Right ventricle myocardium inferior (tissue), 1 donor: ENCODE measurements at regions of chr7 and their contacts with region 1.

Region 1: DNA sequence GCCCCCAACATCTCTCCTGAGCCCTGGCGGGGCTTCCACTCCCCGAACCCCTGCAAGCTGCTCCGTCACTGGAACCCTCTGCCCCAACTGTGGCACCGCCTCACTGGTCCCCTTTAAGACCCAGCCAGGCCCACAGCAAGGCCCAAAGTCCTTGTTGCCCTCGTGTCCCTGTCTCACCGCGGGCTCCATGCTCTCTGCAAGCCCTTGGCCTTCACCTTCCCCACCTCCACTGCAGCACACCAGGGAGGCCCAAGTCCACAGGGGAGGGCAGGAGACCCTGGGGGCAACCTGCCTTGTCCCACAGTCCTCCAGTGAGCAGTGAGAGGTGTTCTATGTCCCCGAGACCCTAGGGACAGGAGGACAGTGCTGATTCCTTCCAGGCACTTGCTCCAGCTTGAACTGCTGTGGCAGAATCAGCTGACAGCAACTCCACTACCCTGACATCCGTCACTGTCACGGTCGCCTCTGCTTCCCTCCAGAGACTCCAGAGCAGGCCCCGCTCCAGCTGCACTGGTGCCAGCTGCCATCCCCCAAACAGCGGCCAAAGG is 105.3 kb downstream of the CYTH3 start:
- DNase-seq: no peak
- ATAC-seq: peak; percentile 67

Region 2: DNA sequence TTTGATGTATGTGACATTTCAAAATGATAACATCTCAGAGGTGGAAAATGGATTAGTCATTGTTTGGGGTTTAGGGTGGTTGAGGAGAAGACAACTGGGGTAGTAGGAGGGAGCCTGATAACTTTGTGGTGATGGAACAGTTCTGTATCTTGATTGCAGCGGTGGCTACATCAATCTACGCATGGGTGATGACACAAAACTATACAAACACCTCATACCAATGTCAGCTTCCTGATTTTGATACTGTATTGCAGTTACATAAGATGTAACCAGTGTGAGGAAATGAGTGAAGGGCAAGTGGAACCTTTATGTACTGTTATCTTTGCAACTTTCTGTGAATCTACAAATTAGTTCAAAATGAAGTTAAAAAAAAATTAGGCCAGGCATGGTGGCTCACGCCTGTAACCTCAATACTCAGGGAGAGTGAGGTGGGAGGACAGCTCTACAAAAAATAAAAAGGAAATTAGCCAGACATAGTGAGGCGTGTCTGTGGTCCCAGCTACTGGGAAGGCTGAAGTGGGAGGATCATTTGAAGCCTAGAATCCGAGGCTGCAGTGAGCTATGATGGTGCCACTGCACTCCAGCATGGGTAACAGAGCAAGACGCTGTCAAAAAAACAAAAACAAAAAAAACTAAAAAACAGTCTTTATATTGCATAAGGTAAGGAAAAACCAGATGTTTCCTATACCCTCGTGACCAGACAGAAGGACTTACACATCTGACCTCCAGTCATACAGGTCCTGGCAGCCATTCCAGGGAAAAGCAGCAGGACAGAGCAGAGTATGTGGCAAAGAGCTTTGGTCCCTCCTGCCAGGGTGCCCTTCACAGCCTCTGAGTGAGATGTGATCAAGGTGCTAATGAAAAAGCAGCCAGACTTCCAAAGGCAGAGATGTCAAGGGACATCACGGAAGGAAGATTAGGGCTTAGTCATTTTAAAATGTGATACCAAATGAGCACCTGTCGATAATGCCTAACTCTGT is 54.6 kb after region 1 on chr7:
- intact Hi-C with region 1: loop called (anchors 5 kb)
- DNase-seq: no peak
- ATAC-seq: peak; percentile 54